ENCODE measurements at regions of chr6 and their contacts with region 1.

Region 1: GRCh38 chr6:40577672-40578071 is 9.5 kb downstream of the LRFN2 start:
- DNase-seq: no peak
- H3K4me3 Mint-ChIP-seq: no peak overlapping the region
- H3K27ac Mint-ChIP-seq: no peak overlapping the region
- H3K4me1 Mint-ChIP-seq: no peaks in the 10 kb centered on the region
- H3K27me3 Mint-ChIP-seq: peaks cover 27% of the 10 kb centered on the region
- CTCF ChIP-seq: no peak

Region 2: DNA sequence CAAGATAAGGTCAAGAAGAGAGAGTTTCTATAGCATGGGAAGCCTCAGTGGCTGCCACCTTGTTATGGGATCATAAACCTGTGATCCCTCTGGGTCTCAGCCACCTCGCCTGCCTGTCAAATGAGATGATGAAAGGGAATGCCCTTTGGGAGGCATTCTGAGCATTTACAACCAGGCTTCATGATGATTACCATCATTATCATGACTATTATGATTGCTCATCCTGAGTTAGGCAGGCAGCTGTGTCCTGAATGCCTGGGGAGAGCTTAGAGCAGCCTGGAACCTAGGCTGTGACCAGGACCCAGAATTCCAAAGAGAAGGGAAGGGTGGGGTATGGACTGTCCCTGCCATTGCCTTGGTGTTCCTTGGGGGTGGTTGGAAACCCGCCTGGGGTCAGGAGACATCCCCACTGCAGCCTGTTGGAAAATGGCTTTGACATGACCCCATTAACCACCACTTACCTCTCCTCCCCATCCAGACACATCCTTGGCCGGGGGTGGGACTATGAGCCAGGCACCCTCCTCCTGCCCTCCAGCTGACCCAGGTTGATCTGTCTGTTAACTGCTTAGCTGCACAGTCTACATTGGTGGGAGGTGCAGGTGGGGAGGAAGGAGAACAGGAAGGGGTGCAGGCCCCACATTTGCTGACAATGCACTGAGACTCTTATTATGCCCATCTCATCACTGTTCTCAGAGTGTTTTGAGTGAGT is 42.4 kb before region 1 on chr6:
- CTCF ChIA-PET with region 1: no interaction called
- intact Hi-C with region 1: no loop called
- DNase-seq: no peak
- H3K4me3 Mint-ChIP-seq: no peak overlapping the region
- H3K27ac Mint-ChIP-seq: no peak overlapping the region
- H3K4me1 Mint-ChIP-seq: no peaks in the 10 kb centered on the region
- H3K27me3 Mint-ChIP-seq: peaks cover 86% of the 10 kb centered on the region
- CTCF ChIP-seq: no peak

Region 3: GRCh38 chr6:40597841-40598240 is 20.2 kb after region 1 on chr6:
- CTCF ChIA-PET with region 1: interaction called, 11 read pairs
- intact Hi-C with region 1: no loop called
- DNase-seq: no peak
- H3K4me3 Mint-ChIP-seq: no peak overlapping the region
- H3K27ac Mint-ChIP-seq: no peak overlapping the region
- H3K4me1 Mint-ChIP-seq: no peaks in the 10 kb centered on the region
- H3K27me3 Mint-ChIP-seq: peaks cover 33% of the 10 kb centered on the region
- CTCF ChIP-seq: no peak